ENCODE measurements at regions of chr2 and their contacts with region 1.

Region 1: DNA sequence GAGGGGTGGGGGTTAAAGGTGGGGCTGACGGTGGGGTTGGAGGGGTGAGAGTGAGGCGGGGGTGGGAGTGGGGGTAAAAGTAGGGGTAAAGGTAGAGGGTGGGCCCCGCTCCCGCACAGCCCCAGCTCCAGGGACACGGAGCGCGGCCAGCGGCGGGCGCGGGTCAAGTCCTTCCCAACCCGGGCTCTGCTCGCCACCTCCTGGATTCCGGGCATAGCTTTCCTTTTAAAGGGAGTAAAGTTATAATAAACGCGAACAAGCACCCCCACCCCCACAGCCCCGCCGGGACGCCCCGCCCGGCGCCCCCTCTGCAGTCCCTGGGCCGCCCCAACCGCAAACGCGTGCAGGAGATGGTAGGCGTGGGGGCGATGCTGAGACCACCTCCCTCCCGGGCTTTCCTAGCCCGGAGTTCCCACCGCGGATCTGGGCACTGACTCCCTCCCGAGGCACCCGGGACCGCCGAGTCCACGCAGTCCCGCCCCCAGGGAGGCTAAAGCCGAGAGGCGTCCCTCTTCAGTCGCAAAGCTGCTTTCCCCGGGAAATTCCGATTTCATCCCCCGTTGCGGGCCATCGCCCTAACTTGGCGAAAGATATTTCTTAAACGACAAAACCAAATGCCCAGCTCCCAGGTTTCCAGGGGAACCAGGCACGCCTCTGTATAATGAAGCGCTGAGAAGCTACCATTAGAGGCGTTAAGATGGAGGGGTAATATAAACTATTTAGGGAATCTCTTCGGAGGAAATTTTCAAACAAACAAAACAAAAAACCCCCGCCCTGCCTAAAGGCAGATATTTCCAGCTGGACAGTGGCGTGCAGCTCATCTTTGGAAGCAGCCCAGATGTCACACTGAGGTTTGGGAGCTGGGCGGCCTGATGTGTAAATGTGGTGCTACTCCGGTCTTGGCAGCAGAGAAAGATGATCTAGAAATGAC is at the start of gene LIMS2:
- DNase-seq: peak in 1 of 2 donors; percentile 46
- H3K4me3 ChIP-seq: peak within 1 kb of the TSS; percentile 89 to 97
- H3K27ac ChIP-seq: peak within 1 kb of the TSS; percentile 93 to 95
- H3K4me1 ChIP-seq: peaks cover 0 to 53% (median 42%) of the 10 kb centered on the region in 4 donors
- H3K27me3 ChIP-seq: no peaks in the 10 kb centered on the region
- CTCF ChIP-seq: peak in 1 of 2 experiments; percentile 5

Region 2: DNA sequence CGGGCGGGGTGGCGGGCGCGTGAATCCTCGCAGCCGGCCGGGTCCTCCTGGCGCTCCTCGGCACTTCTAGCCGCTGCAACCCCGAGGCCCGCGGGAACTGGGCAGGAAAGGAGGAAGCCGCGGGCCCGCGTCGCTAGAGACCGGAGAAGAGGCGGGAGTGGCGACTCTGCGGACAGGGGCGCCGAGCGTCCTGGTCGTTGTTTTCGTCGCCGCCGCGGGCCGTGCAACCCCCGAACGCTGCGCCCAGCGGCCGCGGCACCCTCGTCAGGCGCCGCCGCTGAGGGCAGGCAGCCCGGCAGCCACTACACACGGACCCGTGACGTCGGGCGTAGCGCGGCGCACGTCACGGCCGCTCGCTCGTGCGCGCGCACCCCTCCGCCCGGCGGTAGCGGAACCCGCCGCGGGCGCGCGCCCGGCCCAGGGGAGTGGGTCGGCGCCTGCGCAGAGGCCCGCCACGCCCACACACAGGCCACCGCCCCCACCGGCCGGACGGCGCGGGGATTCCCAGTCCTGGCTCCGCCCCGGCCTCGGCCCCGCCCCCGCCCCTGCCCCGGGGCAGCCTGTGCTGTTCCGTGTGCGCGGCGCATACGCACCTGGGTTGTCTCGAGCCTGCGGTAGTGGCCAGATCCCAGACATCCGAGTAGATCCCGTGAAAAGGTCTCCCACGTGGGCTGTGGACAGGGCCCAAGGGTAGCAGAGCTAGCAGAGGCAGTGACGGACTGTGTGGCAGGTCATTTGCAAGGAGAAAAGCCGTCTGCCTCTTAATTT is 287.8 kb before region 1 on chr2 and contains the start of gene MAP3K2:
- intact Hi-C with region 1: loop called (anchors 10 kb)
- DNase-seq: peak; percentile 90 to 97
- H3K4me3 ChIP-seq: peak within 1 kb of the TSS; percentile 70 to 97
- H3K27ac ChIP-seq: peak within 1 kb of the TSS; percentile 99 to 100
- H3K4me1 ChIP-seq: peaks cover 0 to 54% (median 16%) of the 10 kb centered on the region in 4 donors
- H3K27me3 ChIP-seq: no peaks in the 10 kb centered on the region
- CTCF ChIP-seq: no peak

Region 3: GRCh38 chr2:127649684-127650040 is 25.9 kb before region 1 on chr2:
- intact Hi-C with region 1: loop called (anchors 2 kb)
- DNase-seq: peak; percentile 89
- H3K4me3 ChIP-seq: peak overlapping the region in 1 of 2 donors; percentile 2
- H3K27ac ChIP-seq: peak overlapping the region; percentile 62 to 63
- H3K4me1 ChIP-seq: peaks cover 9 to 82% (median 58%) of the 10 kb centered on the region in 4 donors
- H3K27me3 ChIP-seq: no peaks in the 10 kb centered on the region
- CTCF ChIP-seq: peak; percentile 69 to 88

Region 4: GRCh38 chr2:127707890-127708648 is 32.5 kb after region 1 on chr2:
- intact Hi-C with region 1: no loop called
- DNase-seq: no peak
- H3K4me3 ChIP-seq: no peak overlapping the region
- H3K27ac ChIP-seq: no peak overlapping the region
- H3K4me1 ChIP-seq: peaks cover 0 to 29% (median 13%) of the 10 kb centered on the region in 4 donors
- H3K27me3 ChIP-seq: no peaks in the 10 kb centered on the region
- CTCF ChIP-seq: no peak

Measured in tibial artery (tissue), 4 donors.